Calu3 (cell line): ENCODE measurements at regions of chr11 and their contacts with region 1.

Region 1: DNA sequence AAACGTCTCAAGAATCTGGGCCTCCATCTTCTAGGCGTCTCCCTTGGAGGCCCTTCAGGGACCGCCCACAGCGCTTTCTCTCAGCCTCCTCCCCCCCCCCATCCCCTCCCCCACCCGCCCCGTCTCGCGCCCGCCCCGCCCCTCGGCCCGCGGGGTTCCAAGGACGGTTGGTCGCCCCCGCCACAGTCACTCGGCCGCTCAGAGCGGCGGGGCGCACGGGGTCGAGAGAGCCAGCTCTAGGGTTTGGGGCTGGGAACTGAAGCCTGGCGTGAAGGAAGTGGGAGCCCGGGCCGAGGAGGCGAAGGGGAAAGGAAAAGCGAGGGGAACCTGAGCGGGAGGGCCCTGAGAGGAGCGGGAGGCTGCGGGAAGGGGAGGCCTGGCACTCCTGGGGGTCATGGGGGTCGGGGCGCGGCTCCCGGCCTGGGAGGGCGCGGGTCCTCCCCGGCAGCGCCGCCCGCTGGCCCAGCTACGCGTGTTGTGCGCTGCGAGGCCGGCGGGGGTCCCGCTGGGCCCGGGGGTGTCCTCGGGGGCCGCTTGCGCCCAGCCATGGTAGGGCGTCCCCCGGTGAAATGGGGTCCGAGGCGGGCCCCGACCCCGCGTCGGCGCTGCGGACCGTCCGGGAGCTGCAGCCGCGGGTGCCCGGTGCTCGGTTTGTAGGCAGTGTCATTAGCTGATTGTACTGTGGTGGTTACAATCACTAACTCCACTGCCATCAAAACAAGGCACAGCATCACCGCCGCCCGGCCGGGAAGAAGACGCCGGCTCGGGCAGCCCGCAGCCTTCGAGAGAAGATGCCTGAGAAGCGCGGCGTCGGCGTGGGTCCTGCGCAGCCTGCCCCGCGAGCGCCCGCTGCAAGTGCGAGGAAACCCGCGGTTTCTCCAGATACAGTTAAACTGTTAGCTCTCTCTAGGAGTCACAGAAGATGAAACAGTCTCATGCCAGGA is at the start of gene BTG4:
- DNase-seq: peak; percentile 15
- H3K4me3 Mint-ChIP-seq: peak within 1 kb of the TSS; percentile 65
- H3K27ac Mint-ChIP-seq: peak within 1 kb of the TSS; percentile 38
- H3K4me1 Mint-ChIP-seq: no peaks in the 10 kb centered on the region
- H3K27me3 Mint-ChIP-seq: peaks cover 6% of the 10 kb centered on the region
- CTCF ChIP-seq: no peak
- total RNA-seq, gene BTG4: not detected in 2 replicates

Region 2: GRCh38 chr11:111494040-111494439 is 18.5 kb before region 1 on chr11:
- CTCF ChIA-PET with region 1: no interaction called
- intact Hi-C with region 1: no loop called
- DNase-seq: no peak
- H3K4me3 Mint-ChIP-seq: no peak overlapping the region
- H3K27ac Mint-ChIP-seq: no peak overlapping the region
- H3K4me1 Mint-ChIP-seq: peaks cover 10% of the 10 kb centered on the region
- H3K27me3 Mint-ChIP-seq: no peaks in the 10 kb centered on the region
- CTCF ChIP-seq: no peak

Region 3: DNA sequence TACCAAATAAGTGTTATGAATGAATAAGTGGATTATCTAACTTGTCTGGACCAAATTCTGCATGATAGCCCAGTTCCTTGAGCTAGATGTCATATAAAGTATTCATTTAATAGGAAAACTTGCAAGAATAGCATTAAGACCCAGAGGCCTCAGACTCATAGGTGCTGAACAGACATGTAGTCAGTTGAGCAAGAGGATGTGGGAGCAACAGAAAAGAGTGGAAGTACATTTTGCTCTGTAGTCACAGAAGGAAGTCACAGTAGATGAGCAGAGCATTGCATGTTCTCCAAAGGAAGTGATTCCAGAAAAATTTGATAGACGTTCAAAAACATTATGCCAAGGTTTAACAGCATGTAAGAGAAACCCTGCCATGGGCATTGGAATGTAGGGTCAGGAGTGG is 11.5 kb after region 1 on chr11:
- CTCF ChIA-PET with region 1: interaction called, 12 read pairs
- intact Hi-C with region 1: no loop called
- DNase-seq: no peak
- H3K4me3 Mint-ChIP-seq: no peak overlapping the region
- H3K27ac Mint-ChIP-seq: no peak overlapping the region
- H3K4me1 Mint-ChIP-seq: peaks cover 14% of the 10 kb centered on the region
- H3K27me3 Mint-ChIP-seq: no peaks in the 10 kb centered on the region
- CTCF ChIP-seq: no peak

Region 4: DNA sequence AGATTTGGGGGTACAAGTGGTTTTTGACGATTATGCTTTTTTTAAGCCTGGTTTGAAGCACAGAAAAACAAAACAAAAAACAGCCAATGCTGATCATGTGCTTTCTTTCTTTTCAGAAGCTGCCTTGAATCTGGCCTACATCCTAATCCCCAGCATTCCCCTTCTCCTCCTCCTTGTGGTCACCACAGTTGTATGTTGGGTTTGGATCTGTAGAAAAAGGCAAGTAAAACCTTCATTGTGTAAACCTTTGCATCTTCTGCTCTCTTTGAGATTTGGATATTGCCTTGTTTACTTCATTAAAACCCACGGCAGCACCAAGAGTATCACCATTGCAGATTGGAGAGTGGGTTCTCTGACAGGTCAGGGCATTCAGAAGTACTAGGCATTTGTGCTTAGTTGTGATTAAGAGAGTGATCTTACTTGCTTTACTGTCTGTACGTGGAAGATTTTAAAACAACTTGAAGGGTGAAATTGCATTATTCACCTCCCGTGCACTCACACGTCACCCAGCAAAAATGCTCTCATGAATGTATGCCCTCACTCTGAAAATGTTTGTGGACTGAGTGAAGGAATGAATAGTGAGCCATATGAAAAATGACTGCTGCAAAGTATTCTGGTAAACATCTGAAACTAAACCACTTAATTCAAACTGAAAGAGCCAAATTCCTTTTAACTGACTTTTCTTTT is 45.0 kb after region 1 on chr11:
- CTCF ChIA-PET with region 1: no interaction called
- intact Hi-C with region 1: loop called (anchors 2 kb)
- DNase-seq: no peak
- H3K4me3 Mint-ChIP-seq: no peak overlapping the region
- H3K27ac Mint-ChIP-seq: no peak overlapping the region
- H3K4me1 Mint-ChIP-seq: peaks cover 25% of the 10 kb centered on the region
- H3K27me3 Mint-ChIP-seq: no peaks in the 10 kb centered on the region
- CTCF ChIP-seq: no peak